ENCODE measurements at regions of chr2 and their contacts with region 1.

Region 1: DNA sequence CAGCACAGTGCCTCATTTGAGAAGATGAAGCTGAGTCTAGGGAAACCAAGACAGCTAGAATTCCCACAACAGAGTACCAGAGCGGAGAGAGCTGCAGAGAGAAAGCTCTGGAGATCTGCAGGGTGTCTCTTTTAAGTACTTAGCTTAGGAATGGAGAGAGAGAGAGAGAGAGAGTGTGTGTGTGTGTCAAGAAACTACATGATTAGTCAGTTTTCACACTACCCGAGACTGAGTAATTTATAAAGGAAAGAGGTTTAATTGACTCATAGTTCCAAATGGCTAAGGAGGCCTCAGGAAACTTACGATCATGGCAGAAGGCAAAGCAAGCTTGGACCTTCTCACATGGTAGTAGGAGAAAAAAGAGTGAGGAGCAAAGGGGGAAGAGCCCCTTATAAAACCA is 64.0 kb downstream of the HIBCH start:
- DNase-seq: no peak
- H3K4me3 Mint-ChIP-seq: no peak overlapping the region
- H3K27ac Mint-ChIP-seq: no peak overlapping the region
- H3K4me1 Mint-ChIP-seq: no peaks in the 10 kb centered on the region
- H3K27me3 Mint-ChIP-seq: no peaks in the 10 kb centered on the region
- CTCF ChIP-seq: no peak

Region 2: DNA sequence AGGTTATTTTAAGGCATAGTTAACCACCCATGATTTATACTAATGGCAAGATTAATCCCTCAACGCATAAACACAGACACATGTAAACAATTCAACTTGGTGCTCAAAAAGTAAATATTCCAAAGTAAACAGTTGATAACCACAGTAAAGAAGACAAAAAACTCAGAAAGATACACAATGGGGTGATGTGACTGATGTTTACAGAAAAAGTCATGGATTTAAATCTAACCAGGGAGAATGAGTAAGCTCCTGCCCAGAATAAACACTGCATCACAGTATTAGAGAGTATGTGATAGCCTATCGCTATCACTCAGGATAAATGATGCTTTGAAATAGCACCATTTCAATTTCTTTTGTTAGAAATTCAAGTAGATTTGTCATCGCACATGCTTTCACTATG is 14.6 kb after region 1 on chr2:
- CTCF ChIA-PET with region 1: no interaction called
- intact Hi-C with region 1: loop called (anchors 1 kb)
- DNase-seq: no peak
- H3K4me3 Mint-ChIP-seq: no peak overlapping the region
- H3K27ac Mint-ChIP-seq: no peak overlapping the region
- H3K4me1 Mint-ChIP-seq: peaks cover 12% of the 10 kb centered on the region
- H3K27me3 Mint-ChIP-seq: no peaks in the 10 kb centered on the region
- CTCF ChIP-seq: no peak